ENCODE measurements at regions of chr6 and their contacts with region 1.

Region 1: DNA sequence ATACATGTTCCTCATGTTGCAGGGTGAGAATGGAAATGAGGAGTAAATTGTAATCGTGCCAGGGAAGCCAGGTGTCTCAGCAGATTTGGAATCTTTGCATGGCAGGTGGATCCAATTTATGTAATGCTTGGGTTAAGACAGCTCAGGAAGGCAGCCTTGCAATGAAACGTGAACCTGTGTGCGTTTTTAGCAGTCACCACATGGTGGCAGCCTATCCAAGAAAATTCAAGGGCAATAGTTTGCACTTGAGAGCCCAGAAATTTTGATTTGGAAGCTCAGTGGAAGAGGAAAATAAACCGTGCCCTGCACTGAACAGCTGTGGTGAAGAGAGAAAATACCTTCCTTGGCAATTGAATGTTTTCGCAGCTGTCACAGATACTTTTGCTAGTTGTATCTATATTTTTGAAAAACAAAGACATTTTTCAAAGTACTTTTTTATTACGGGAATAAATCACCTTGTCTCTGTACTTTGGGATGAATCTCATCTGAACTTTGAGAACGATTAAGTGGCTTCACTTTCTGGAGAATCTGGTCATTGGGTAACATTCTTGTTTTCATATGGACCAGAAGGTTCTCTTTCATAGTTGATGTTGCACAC is 26.5 kb downstream of the MTHFD1L start:
- DNase-seq: peak in 1 of 2 donors; percentile 61
- ATAC-seq: peak; percentile 87
- H3K4me3 ChIP-seq: no peak overlapping the region
- H3K27ac ChIP-seq: no peak overlapping the region
- H3K4me1 ChIP-seq: no peaks in the 10 kb centered on the region
- H3K27me3 ChIP-seq: no peaks in the 10 kb centered on the region

Region 2: GRCh38 chr6:150981095-150981494 is 89.1 kb after region 1 on chr6:
- intact Hi-C with region 1: loop called in 1 of 2 experiments (anchors 10 kb)
- DNase-seq: no peak
- ATAC-seq: no peak
- H3K4me3 ChIP-seq: no peak overlapping the region
- H3K27ac ChIP-seq: peak overlapping the region in 1 of 2 donors; percentile 43
- H3K4me1 ChIP-seq: no peaks in the 10 kb centered on the region
- H3K27me3 ChIP-seq: no peaks in the 10 kb centered on the region

Region 3: GRCh38 chr6:151240036-151240685 is 348.2 kb after region 1 on chr6:
- intact Hi-C with region 1: loop called in 1 of 2 experiments (anchors 10 kb)
- DNase-seq: peak; percentile 88 to 91
- ATAC-seq: peak; percentile 91
- H3K4me3 ChIP-seq: peak overlapping the region; percentile 58 to 90
- H3K27ac ChIP-seq: peak overlapping the region; percentile 23 to 76
- H3K4me1 ChIP-seq: no peaks in the 10 kb centered on the region
- H3K27me3 ChIP-seq: no peaks in the 10 kb centered on the region

Region 4: DNA sequence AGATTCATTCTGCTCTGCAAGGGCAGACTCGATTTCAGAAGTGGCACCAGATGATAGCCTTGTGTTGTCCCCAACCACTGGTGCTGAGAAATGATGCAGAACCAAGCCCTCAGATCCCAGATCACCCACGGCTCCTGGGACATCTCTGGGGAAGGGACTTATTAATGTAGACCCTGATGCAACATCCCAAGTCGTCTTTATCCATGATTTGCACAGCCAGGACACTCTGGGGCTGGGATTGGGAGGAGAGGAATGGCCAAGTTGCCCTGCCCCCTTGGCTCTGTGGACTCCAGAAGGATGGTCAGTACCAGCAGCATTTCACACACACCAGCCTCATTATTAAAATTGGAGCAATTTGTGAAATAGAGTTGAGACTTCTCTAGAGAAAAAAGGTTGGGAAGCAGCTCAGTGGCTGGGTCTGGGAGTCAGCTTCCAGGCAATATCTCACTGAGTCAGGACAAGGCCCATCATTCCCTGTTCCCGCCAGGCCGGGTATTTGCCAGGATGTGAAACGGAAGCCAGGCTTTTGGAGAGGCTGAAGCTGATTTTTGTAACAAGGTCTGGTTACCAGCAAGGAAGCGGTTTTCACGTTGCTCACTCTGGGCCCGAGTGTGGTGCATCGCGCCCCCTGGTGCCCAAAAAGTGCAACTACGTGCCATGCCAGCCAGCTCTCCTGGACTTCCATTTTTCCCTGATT is 432.0 kb after region 1 on chr6:
- intact Hi-C with region 1: loop called in 1 of 2 experiments (anchors 2 kb)
- DNase-seq: peak; percentile 89 to 95
- ATAC-seq: peak; percentile 94
- H3K4me3 ChIP-seq: no peak overlapping the region
- H3K27ac ChIP-seq: no peak overlapping the region
- H3K4me1 ChIP-seq: peaks cover 0 to 7% of the 10 kb centered on the region in 2 donors
- H3K27me3 ChIP-seq: no peaks in the 10 kb centered on the region

Region 5: DNA sequence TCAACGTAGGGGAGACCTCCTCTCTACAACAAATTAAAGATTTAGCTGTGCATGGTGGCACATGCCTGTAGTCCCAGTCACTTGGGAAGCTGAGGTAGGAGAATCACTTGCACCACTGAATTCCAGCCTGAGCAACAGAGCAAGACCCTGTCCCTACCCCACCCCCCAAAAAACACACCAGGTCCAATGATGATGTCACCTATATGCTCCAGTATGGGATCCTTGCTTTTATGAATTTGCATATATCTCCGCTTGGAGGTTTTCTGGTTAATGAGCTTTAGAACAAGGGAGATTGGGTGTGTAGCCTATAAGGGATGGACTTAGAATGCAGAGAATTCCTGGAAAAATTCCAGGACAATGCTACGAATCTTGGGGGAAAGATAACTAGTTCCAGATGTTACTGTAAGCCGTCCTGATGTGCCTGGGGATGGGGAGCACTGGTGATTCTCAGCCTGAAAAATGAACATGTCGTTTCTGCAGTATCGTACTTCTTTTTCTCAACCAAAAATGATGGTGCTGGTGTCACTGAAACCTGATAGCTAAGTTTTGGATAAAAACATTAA is 438.2 kb after region 1 on chr6:
- intact Hi-C with region 1: loop called (anchors 2 to 5 kb)
- DNase-seq: no peak
- ATAC-seq: no peak
- H3K4me3 ChIP-seq: no peak overlapping the region
- H3K27ac ChIP-seq: no peak overlapping the region
- H3K4me1 ChIP-seq: no peaks in the 10 kb centered on the region
- H3K27me3 ChIP-seq: no peaks in the 10 kb centered on the region